Activated CD4-positive, alpha-beta memory T cell treated with anti-CD3 and anti-CD28 coated beads for 36 hours (primary cell): ENCODE measurements at regions of chr2 and their contacts with region 1.

Region 1: DNA sequence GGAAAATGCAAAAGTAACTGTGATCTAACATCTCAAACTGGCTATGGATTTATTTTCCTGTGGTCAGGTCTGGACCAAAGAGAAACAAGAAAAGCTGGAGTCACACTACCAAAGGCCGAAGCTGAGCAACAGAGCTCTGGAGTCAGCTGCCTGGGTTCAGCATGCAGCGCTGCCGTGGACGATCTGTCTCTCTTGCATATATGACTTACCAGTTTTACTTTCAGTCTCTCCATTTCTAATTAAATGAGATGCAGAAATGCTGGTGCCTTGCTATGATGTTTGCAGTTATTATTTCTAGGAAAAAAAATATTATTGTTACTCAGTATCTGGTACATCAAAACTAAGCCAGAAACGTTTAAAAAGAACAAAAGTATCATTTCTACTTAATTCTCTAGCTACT is 813.2 kb downstream of the RNF144A start:
- DNase-seq: peak; percentile 61
- H3K4me3 Mint-ChIP-seq: peak overlapping the region; percentile 80
- H3K27ac Mint-ChIP-seq: peak overlapping the region; percentile 89
- H3K4me1 Mint-ChIP-seq: peaks cover 53% of the 10 kb centered on the region
- H3K27me3 Mint-ChIP-seq: no peaks in the 10 kb centered on the region

Region 2: GRCh38 chr2:7744827-7745226 is 14.4 kb after region 1 on chr2:
- CTCF ChIA-PET with region 1: interaction called, 4 read pairs
- POLR2A ChIA-PET with region 1: interaction called, 6 read pairs
- intact Hi-C with region 1: loop called (anchors 2 kb)
- DNase-seq: peak; percentile 76
- H3K4me3 Mint-ChIP-seq: no peak overlapping the region
- H3K27ac Mint-ChIP-seq: peak overlapping the region; percentile 64
- H3K4me1 Mint-ChIP-seq: peaks cover 32% of the 10 kb centered on the region
- H3K27me3 Mint-ChIP-seq: no peaks in the 10 kb centered on the region